Stomach (tissue), 19 donors: ENCODE measurements at regions of chr16 and their contacts with region 1.

Region 1: DNA sequence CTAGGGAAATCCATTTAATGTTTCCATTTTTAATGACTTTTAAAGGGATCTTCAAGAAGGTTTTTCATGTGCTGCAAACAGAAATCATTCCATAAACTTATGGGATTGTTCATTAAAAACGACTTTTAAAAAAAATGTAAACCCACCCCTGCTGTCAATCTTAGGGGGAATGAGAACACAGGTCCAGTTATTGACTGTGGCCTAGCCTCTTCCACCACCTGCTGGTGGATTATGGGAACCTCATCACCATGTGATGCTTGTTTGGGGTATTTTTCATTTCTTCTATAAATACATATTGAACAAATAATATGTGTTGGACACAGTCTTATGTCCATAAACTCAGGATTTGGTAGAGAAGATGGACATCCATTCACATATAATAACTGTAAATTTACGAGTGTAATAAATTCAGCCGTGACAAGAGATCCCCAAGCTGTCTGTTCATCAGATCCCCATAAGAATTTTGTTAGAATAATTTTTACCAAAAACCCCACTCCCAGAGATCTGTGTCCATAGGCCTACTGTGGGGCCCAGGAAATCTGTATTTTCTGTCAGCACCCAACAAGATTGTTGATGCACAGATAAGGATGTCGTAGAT is 42.0 kb upstream of the TMC5 start:
- DNase-seq: peak; percentile 46 to 82
- H3K4me3 ChIP-seq: no peak overlapping the region
- H3K27ac ChIP-seq: no peak overlapping the region
- H3K4me1 ChIP-seq: peaks cover 7 to 26% (median 15%) of the 10 kb centered on the region in 4 donors
- H3K27me3 ChIP-seq: no peaks in the 10 kb centered on the region
- CTCF ChIP-seq: peak in 6 of 7 experiments; percentile 37 to 92 (median 86)
- EP300 ChIP-seq: no peak
- POLR2A ChIP-seq: no peak

Region 2: DNA sequence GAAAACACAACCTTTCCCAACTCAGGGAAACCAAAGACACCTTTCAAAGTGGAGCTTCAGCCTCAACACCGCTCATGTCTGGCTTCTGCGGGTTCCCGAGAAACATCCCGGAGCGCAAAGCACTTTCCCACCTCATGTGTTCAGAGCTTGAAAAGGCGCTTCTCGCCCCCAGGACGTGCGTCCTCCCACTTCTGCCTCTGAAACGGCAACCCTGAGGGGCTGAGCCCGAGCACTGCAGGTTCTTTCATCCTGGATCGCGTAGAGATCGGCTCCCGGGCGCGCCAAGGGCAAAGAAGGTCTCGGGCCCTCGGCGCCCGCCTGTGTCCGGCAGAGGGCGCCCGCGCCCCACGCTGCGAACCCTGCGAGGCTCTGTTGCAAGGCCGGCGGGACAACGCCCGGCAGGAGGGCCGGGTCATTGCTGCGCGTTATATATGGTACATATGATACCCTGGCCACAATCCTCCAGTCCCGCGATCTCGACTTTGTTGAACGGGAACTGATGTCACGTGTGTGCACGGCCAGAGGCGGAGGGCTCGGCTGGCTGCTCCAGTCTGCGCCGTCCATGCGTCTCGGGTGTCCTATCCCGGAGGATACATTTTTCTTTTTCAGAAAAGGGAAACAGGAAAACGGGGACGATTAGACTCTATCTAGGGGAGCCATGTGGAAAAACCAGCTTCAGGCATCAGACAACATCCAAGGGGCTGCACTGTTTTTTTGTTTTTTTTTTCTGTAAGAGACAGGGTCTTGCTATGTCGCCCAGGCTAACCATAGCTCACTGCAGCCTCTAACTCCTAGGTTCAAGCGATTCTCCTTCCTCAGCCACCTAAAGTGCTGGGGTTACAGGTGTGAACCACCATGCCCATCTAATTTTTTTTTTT is 289.1 kb before region 1 on chr16:
- intact Hi-C with region 1: loop called (anchors 5 kb)
- DNase-seq: peak; percentile 89 to 96
- H3K4me3 ChIP-seq: peak overlapping the region; percentile 37 to 44 (median 42)
- H3K27ac ChIP-seq: peak overlapping the region in 2 of 5 donors; percentile 24 to 36
- H3K4me1 ChIP-seq: peaks cover 14 to 17% (median 15%) of the 10 kb centered on the region in 4 donors
- H3K27me3 ChIP-seq: no peaks in the 10 kb centered on the region
- CTCF ChIP-seq: peak in 5 of 7 experiments; percentile 88 to 99 (median 97)
- EP300 ChIP-seq: no peak
- POLR2A ChIP-seq: no peak

Region 3: DNA sequence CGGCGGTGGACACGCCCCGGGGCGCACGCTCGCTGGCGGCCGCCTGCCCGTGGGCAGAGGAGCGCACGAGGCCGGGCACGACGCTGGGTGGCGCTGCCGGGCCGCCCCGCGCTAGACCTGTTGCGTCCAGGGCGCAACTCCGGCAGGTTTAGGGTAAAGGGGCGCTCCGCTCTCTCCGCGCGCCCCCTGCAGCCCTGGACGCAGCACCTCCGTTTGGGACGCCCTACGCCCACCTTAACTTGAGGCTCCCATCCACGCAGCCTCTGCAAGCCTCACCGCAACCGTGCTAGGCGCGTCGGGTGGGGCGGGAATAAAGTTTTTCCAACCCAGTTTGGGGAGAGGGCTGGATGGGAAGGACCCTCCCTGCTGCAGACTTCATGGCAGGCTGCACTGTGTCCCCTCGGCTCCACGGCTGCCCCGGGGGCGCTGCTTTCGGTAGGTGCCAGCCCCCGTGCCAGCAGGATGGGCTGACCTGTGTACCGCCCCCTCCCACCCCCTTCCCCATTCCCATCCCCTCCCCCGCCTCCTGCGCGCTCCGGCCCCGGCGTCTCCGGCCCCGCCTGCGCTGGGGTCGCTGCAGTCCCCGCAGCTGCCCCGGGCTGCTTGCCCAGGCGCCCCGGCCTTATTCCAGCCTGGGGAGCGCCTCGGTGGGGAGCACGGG is 207.8 kb before region 1 on chr16 and contains the start of gene SYT17:
- intact Hi-C with region 1: loop called (anchors 10 kb)
- DNase-seq: peak; percentile 81 to 95
- H3K4me3 ChIP-seq: peak within 1 kb of the TSS; percentile 56 to 90 (median 76)
- H3K27ac ChIP-seq: peak within 1 kb of the TSS; percentile 33 to 82 (median 76)
- H3K4me1 ChIP-seq: peaks cover 10 to 33% (median 22%) of the 10 kb centered on the region in 4 donors
- H3K27me3 ChIP-seq: peaks cover 0 to 33% (median 21%) of the 10 kb centered on the region in 3 donors
- CTCF ChIP-seq: peak in 4 of 7 experiments; percentile 28 to 86 (median 76)
- EP300 ChIP-seq: no peak
- POLR2A ChIP-seq: no peak
- total RNA-seq, gene SYT17: 8.1 to 37.1 (median 18.7) TPM

Region 4: GRCh38 chr16:19486757-19487330 is 111.2 kb after region 1 on chr16:
- intact Hi-C with region 1: no loop called
- DNase-seq: no peak
- H3K4me3 ChIP-seq: no peak overlapping the region
- H3K27ac ChIP-seq: peak overlapping the region in 1 of 5 donors; percentile 70
- H3K4me1 ChIP-seq: peaks cover 0 to 18% (median 7%) of the 10 kb centered on the region in 4 donors
- H3K27me3 ChIP-seq: no peaks in the 10 kb centered on the region
- CTCF ChIP-seq: no peak
- EP300 ChIP-seq: no peak
- POLR2A ChIP-seq: no peak